SK-N-SH (cell line): ENCODE measurements at regions of chr4 and their contacts with region 1.

Region 1: GRCh38 chr4:94406668-94407437 is 44.9 kb upstream of the PDLIM5 start:
- DNase-seq: peak; percentile 36
- H3K4me3 ChIP-seq: no peak overlapping the region; a peak in 1 of 4 replicates
- H3K27ac ChIP-seq: no peak overlapping the region
- H3K4me1 ChIP-seq: peaks cover 0 to 31% of the 10 kb centered on the region in 2 experiments; a peak in 2 of 4 replicates
- H3K27me3 ChIP-seq: no peaks in the 10 kb centered on the region
- CTCF ChIP-seq: peak; percentile 94
- EP300 ChIP-seq: no peak
- RAD21 ChIP-seq: peak; percentile 89

Region 2: DNA sequence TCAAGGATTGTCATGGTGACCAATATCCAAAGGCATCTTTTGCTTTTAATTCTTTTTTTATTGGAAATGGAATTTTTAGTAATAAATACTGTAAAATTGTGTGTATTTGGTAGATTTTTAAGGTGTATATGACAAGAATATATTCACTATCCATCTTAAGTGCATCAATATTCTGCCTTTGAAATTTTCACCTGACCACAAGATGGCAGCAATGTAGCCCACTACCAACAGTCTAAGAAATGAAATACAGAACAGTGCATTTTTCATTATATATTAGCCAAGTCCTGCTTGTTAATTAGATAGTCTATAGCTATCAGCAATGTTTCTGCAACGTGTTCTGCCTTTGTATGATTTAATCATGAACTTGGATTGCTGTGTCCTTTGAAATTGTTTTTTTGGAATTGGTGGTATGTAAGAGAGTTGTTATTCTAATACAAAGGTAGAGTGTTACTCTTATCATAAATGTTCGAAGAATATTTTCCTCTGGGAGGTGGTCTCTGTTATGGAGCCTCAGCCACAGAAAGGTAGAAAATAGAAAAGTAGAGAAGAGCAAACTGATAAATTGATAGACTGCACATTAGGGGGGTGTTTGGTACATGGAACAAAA is 102.4 kb before region 1 on chr4:
- CTCF ChIA-PET with region 1: interaction called, 17 read pairs
- POLR2A ChIA-PET with region 1: no interaction called
- DNase-seq: peak; percentile 29
- H3K4me3 ChIP-seq: no peak overlapping the region; a peak in 1 of 4 replicates
- H3K27ac ChIP-seq: no peak overlapping the region
- H3K4me1 ChIP-seq: no peaks in the 10 kb centered on the region; a peak in 2 of 4 replicates
- H3K27me3 ChIP-seq: no peaks in the 10 kb centered on the region
- CTCF ChIP-seq: peak; percentile 85
- EP300 ChIP-seq: no peak
- RAD21 ChIP-seq: peak; percentile 86

Region 3: DNA sequence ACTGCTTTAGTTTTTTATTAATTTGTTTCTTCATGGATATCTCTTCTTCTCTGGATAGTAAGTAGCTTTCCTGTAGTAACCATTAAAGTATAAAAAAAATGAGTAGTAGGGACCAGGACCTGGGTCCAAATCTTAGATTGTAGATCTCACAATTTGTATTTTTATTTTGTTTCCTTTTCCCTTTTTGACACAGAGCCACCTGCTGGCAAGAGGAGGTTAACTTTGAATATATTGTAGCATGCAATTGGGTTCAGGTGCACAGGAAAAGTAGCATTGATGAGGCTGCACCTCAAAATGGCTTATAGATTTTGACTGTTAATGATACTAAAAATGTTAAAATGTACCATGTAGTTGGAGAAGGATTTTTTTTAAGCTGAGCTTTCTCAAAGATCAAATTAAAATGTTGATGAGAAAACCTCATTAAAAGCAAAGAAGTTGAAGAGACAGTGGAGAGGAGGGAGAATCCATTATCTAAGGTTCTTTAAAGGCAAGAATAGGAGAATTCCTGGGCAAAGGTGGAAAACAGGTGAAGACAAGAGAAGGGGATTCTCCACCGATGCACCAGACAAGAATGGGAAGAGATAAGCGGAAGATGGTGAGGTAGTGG is 15.9 kb before region 1 on chr4:
- CTCF ChIA-PET with region 1: interaction called, 16 read pairs
- POLR2A ChIA-PET with region 1: no interaction called
- DNase-seq: peak; percentile 20
- H3K4me3 ChIP-seq: no peak overlapping the region
- H3K27ac ChIP-seq: no peak overlapping the region
- H3K4me1 ChIP-seq: no peaks in the 10 kb centered on the region
- H3K27me3 ChIP-seq: no peaks in the 10 kb centered on the region
- CTCF ChIP-seq: peak; percentile 72
- EP300 ChIP-seq: no peak
- RAD21 ChIP-seq: peak; percentile 65

Region 4: DNA sequence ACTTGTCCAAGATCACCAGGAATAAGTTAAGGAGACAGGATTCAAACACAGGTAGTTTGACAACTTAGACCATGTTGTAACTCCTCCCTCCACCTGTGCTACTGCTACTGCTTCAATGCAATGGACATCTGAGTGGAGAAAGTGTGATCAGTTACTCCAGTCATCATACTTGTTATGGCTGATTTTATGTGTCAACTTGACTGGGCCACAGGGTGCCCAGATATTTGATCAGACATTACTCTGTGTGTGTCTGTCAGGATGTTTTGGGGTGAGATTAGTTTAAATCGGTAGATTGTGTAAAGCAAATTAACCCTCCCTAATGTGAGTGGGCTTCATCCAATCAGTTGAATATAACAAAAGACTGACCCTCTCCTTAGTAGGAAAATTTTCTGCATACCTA is 10.1 kb after region 1 on chr4:
- CTCF ChIA-PET with region 1: interaction called, 20 read pairs
- POLR2A ChIA-PET with region 1: no interaction called
- DNase-seq: no peak
- H3K4me3 ChIP-seq: no peak overlapping the region
- H3K27ac ChIP-seq: no peak overlapping the region
- H3K4me1 ChIP-seq: peaks cover 0 to 20% of the 10 kb centered on the region in 2 experiments; a peak in 3 of 4 replicates
- H3K27me3 ChIP-seq: no peaks in the 10 kb centered on the region
- CTCF ChIP-seq: no peak
- EP300 ChIP-seq: no peak
- RAD21 ChIP-seq: no peak

Region 5: GRCh38 chr4:94428884-94429557 is 22.2 kb after region 1 on chr4:
- CTCF ChIA-PET with region 1: interaction called, 11 read pairs
- POLR2A ChIA-PET with region 1: no interaction called
- DNase-seq: no peak
- H3K4me3 ChIP-seq: no peak overlapping the region
- H3K27ac ChIP-seq: no peak overlapping the region
- H3K4me1 ChIP-seq: no peaks in the 10 kb centered on the region
- H3K27me3 ChIP-seq: no peaks in the 10 kb centered on the region
- CTCF ChIP-seq: no peak
- EP300 ChIP-seq: no peak
- RAD21 ChIP-seq: no peak

Region 6: DNA sequence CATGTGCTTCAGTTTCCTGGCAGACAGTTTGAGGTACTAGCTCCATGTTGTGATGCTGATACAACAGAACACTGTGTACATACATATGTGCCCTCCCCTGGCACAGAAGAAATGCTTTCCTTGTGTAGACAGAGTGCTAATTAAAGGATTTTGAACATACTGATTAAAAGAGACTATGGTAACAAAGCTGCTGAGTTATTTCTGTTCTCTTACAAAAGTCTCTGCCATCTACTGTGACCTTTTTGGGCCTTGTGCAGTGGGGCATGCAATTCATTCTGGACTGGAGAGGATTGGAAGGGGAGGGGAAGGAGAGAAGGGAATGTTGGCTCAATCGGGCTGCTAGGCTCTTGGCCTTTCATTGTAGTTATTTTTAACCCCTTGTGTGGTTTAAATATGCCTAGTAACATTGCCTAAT is 50.8 kb after region 1 on chr4:
- CTCF ChIA-PET with region 1: no interaction called
- POLR2A ChIA-PET with region 1: no interaction called
- DNase-seq: peak; percentile 12
- H3K4me3 ChIP-seq: no peak overlapping the region
- H3K27ac ChIP-seq: peak overlapping the region in 1 of 2 experiments; percentile 50; a peak in 1 of 4 replicates
- H3K4me1 ChIP-seq: peaks cover 7 to 10% of the 10 kb centered on the region in 2 experiments; a peak in 3 of 4 replicates
- H3K27me3 ChIP-seq: no peaks in the 10 kb centered on the region
- CTCF ChIP-seq: no peak
- EP300 ChIP-seq: no peak
- RAD21 ChIP-seq: no peak

Region 7: DNA sequence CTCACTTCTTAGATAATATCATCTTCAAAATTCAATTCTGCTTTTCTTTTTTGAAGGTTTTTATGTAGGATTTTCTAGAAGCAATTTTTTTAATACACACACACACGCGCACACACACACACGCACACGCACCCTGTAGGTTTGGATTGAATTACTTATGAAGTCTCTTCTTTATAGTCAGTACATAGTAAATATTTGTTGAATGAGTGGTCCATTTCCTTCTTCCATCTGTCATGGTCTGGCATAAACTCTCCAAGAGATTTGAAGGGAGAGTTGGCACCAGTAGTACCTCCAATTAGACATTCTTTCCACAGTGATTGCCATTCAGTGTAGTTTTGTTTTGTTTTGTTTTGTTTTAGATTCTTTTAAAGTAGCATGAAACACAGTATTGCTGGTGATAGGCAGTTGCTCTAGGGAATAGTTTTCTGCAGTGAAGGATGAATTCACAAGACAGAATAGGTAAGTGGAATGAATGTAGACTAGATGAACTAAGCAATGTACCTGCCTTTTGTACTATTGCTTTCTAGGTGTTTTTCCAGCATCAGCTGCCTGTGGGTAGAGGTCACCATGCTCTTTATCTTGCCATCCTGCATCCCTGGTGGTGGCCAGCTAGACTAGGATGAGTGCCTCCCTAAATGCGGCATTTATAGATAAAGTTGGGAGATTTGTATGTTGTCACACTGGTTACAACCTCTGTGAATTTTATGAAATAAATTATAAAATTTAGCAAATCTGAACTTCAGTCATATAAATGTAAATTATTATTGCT is 65.4 kb after region 1 on chr4:
- CTCF ChIA-PET with region 1: no interaction called
- POLR2A ChIA-PET with region 1: no interaction called
- DNase-seq: no peak
- H3K4me3 ChIP-seq: no peak overlapping the region
- H3K27ac ChIP-seq: peak overlapping the region in 1 of 2 experiments; percentile 74; a peak in 3 of 4 replicates
- H3K4me1 ChIP-seq: peaks cover 0 to 13% of the 10 kb centered on the region in 2 experiments; a peak in 1 of 4 replicates
- H3K27me3 ChIP-seq: no peaks in the 10 kb centered on the region
- CTCF ChIP-seq: no peak
- EP300 ChIP-seq: peak in 1 of 2 experiments; percentile 65; a peak in 1 of 4 replicates
- RAD21 ChIP-seq: no peak

Region 8: DNA sequence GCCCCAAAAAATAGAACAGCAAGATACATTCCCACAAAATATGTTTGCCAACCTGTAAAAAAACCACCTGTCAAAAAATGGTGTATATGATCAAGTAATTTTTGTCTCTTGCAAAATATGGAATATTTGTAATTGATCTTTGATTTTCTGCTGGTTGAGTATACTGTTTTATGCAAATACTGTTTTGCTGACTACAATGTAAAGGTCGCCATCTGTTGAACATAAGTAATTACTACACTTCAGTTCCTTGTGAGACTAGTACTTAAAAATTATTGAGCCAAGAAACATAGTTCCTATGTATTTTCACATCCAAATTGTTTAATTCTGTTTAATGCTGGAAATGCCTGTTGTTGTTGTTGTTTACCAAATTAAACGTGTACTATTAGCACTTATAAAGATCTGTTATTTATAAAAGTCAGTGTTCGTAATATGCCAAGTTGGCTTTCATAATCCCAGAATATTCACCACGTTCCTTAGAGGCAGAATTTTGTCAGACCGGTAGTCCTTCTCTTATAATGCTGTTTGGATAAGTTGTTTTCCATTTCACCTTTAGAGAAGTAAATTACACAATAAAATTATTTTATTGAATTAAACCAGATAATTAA is 189.1 kb after region 1 on chr4:
- CTCF ChIA-PET with region 1: interaction called, 23 read pairs
- POLR2A ChIA-PET with region 1: no interaction called
- DNase-seq: peak; percentile 42
- H3K4me3 ChIP-seq: no peak overlapping the region
- H3K27ac ChIP-seq: no peak overlapping the region
- H3K4me1 ChIP-seq: peaks cover 0 to 10% of the 10 kb centered on the region in 2 experiments; a peak in 1 of 4 replicates
- H3K27me3 ChIP-seq: no peaks in the 10 kb centered on the region
- CTCF ChIP-seq: peak; percentile 81
- EP300 ChIP-seq: no peak
- RAD21 ChIP-seq: peak; percentile 92

Region 9: DNA sequence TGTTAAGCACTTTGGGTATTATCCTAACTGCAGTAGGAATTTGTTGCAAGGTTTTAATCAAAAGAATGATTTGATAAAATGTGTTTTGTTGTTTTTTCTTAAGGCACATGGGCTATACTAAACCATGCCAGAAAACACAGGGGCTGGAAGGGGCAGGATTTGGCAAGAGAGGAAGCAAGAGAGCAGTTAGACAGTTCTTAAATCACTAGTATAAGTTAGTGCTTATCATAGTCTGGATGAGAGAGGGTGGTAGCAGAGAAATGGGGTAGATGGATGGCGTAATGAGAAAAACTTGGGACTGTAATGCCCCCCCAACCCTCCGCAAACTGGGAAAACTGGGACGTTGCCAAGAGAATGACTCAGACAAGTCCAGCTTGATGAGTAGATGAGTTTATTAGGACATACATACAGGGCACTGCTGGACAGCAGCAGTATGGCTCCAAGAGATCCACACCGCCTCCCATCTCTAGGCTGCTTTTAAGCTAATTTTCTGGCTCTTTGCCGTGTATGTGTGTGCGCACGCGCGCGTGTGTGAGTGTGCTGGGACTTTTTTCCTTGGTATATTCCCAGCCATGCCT is 196.4 kb after region 1 on chr4:
- CTCF ChIA-PET with region 1: interaction called, 23 read pairs
- POLR2A ChIA-PET with region 1: no interaction called
- DNase-seq: no peak
- H3K4me3 ChIP-seq: no peak overlapping the region
- H3K27ac ChIP-seq: peak overlapping the region in 1 of 2 experiments; percentile 54; a peak in 1 of 4 replicates
- H3K4me1 ChIP-seq: peaks cover 4 to 5% of the 10 kb centered on the region in 2 experiments; a peak in 1 of 4 replicates
- H3K27me3 ChIP-seq: no peaks in the 10 kb centered on the region
- CTCF ChIP-seq: no peak
- EP300 ChIP-seq: no peak
- RAD21 ChIP-seq: no peak